GM12878 (cell line): ENCODE measurements at regions of chr6 and their contacts with region 1.

Region 1: GRCh38 chr6:81562169-81562568 is 190.3 kb downstream of the TENT5A start:
- DNase-seq: no peak
- ATAC-seq: no peak
- H3K4me3 ChIP-seq: no peak overlapping the region
- H3K27ac ChIP-seq: no peak overlapping the region
- H3K4me1 ChIP-seq: no peaks in the 10 kb centered on the region
- H3K27me3 ChIP-seq: no peaks in the 10 kb centered on the region
- CTCF ChIP-seq: no peak
- EP300 ChIP-seq: no peak
- POLR2A ChIP-seq: no peak
- RAD21 ChIP-seq: no peak

Region 2: GRCh38 chr6:81531869-81532561 is 30.2 kb before region 1 on chr6:
- CTCF ChIA-PET with region 1: interaction called, 3 read pairs
- POLR2A ChIA-PET with region 1: interaction called, 10 read pairs
- RAD21 ChIA-PET with region 1: interaction called, 28 read pairs
- SMC1A ChIA-PET with region 1: interaction called, 18 read pairs
- in situ Hi-C with region 1: no loop called
- intact Hi-C with region 1: no loop called
- DNase-seq: no peak
- ATAC-seq: no peak
- H3K4me3 ChIP-seq: no peak overlapping the region
- H3K27ac ChIP-seq: no peak overlapping the region
- H3K4me1 ChIP-seq: no peaks in the 10 kb centered on the region
- H3K27me3 ChIP-seq: no peaks in the 10 kb centered on the region
- CTCF ChIP-seq: no peak
- EP300 ChIP-seq: no peak
- POLR2A ChIP-seq: no peak
- RAD21 ChIP-seq: no peak